ENCODE measurements at regions of chr2 and their contacts with region 1.

Region 1: GRCh38 chr2:44981136-44982108 is 27.8 kb downstream of the SIX2 start:
- DNase-seq: peak; percentile 40
- H3K4me3 ChIP-seq: no peak overlapping the region
- H3K27ac ChIP-seq: no peak overlapping the region
- H3K4me1 ChIP-seq: no peaks in the 10 kb centered on the region
- H3K27me3 ChIP-seq: no peaks in the 10 kb centered on the region
- CTCF ChIP-seq: peak; percentile 81 to 92

Region 2: DNA sequence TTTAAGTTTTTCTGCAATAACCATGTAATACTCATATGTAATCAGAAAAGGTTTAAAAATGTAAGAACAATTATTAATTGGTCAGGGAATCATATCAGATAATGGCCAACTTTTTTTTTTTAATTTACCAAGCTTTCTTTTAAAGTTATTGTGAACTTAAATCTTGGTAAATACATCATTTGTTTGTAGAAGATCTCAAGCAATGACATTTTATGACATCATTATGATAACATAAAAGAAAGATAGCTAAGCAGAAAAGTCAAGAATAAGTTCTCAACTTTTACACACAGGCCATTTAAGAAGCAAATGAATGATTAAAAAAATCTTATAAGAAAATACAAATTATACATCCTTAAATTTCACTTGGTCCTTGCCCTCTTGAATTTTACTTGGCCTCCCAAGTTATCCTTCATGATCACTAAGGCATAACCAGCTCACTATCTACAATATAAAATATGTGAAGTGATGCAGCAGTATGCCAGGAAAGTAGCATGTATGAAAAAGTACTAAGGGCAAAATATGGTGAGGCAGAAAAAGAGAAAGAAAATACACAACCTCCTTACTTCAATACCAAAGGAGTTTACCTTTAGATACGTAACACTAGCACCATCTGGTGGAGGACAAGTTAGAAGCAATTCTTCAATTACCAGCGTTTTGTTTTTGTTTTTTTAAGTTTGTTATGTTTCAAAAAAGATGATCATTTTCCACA is 513.0 kb after region 1 on chr2:
- CTCF ChIA-PET with region 1: interaction called, 4 read pairs
- dilution Hi-C with region 1: loop called (anchors 25 kb)
- in situ Hi-C with region 1: loop called (anchors 5 kb)
- intact Hi-C with region 1: loop called (anchors 1 kb)
- DNase-seq: peak; percentile 33
- H3K4me3 ChIP-seq: no peak overlapping the region
- H3K27ac ChIP-seq: no peak overlapping the region
- H3K4me1 ChIP-seq: no peaks in the 10 kb centered on the region
- H3K27me3 ChIP-seq: no peaks in the 10 kb centered on the region
- CTCF ChIP-seq: peak; percentile 76 to 78

Region 3: GRCh38 chr2:45578056-45578809 is 596.8 kb after region 1 on chr2:
- CTCF ChIA-PET with region 1: interaction called, 6 read pairs
- dilution Hi-C with region 1: no loop called
- in situ Hi-C with region 1: no loop called
- intact Hi-C with region 1: loop called (anchors 1 kb)
- DNase-seq: no peak
- H3K4me3 ChIP-seq: no peak overlapping the region
- H3K27ac ChIP-seq: no peak overlapping the region
- H3K4me1 ChIP-seq: no peaks in the 10 kb centered on the region
- H3K27me3 ChIP-seq: no peaks in the 10 kb centered on the region
- CTCF ChIP-seq: peak; percentile 27 to 42

Region 4: DNA sequence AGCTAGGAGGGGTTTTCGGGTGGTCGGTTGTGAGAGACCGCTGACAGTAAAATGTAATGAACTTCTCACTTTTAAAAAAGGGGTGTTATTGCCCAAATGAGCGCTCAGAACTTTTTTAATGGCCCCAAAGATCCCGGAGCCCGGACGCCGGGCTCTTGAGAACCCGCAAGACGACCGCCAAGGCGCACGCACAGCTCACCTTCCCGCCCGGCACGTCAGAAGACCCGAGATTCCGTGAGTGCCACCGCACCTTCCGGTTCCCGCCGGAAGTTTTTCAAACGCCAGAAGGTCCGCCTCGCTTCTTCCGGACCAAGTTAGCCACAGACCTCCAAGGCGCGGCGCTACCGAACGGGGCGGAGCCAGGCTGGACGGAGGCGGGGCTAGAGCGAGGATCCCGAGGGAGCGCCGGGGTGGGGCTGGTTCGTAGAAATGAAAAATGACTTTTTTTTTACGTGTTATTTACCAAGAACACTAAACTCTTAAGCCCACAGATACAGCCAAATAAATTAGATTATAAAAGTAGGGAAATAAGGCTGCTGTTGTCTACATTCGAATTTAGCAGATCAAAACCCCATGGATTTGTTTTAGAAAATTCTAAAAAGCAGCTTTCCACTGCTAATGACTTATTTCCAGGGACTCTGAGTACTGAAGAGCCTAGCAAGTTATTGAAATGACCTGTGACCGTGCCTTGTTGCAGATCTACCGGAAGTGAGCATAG is 629.8 kb after region 1 on chr2 and contains the start of gene SRBD1:
- CTCF ChIA-PET with region 1: no interaction called
- dilution Hi-C with region 1: no loop called
- in situ Hi-C with region 1: no loop called
- intact Hi-C with region 1: loop called (anchors 10 kb)
- DNase-seq: peak; percentile 90
- H3K4me3 ChIP-seq: peak within 1 kb of the TSS; percentile 59 to 99 (median 64)
- H3K27ac ChIP-seq: peak within 1 kb of the TSS; percentile 95
- H3K4me1 ChIP-seq: peaks cover 21% of the 10 kb centered on the region
- H3K27me3 ChIP-seq: no peaks in the 10 kb centered on the region
- CTCF ChIP-seq: no peak
- total RNA-seq, gene SRBD1: 14.3 to 18.8 TPM

Region 5: DNA sequence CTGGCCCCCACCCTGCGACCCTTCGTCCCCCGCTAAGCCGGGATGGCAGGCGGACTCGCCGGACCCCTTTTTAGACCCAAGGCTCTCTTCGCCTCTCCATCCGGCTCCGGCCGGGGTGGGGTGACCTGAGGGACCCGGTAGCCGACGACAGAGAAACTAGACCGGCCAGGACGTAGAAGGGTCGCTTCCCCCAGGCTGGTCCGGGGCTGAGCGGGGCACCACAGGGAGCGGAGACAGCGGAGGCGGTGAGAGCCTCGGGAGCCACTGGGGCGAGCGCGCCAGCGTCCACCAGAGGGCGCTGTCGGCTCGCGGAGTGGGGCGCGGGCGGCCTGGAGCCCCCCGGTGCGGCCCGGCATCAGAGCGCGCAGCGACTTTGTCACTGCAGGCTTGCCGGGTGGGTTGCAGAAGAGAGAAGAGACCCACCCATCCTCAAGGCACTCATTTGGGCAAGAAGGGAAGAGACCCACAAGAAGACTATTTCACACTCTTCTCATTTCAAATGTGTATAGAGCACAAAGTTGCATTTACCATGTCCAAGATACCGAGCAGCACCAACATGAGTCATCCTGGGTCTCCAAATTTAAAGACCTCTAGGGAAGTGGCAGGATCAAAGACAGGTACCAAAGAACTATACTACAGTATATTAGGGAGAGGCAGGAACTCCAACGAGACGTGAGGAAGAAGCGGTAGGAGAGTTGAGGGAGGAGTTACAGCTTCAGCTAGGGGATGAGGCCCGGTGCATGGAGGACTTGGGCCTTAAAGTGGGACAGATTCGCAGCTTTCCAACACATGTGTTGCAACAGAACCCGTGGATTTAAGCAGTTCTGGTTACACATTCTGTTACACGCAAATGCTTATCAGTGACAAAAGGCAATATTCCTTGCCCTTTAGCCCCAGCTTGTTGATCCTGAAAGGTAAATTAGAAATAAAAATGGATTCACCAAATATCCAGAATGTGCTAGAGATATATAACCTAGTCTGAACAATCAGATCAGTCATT is 662.4 kb after region 1 on chr2:
- CTCF ChIA-PET with region 1: no interaction called
- dilution Hi-C with region 1: no loop called
- in situ Hi-C with region 1: no loop called
- intact Hi-C with region 1: loop called (anchors 2 kb)
- DNase-seq: peak; percentile 49
- H3K4me3 ChIP-seq: peak overlapping the region; percentile 48 to 65 (median 51)
- H3K27ac ChIP-seq: no peak overlapping the region
- H3K4me1 ChIP-seq: peaks cover 12% of the 10 kb centered on the region
- H3K27me3 ChIP-seq: peaks cover 2% of the 10 kb centered on the region
- CTCF ChIP-seq: peak; percentile 61 to 83

Measured in mammary epithelial cell (primary cell).